ENCODE measurements at regions of chr22 and their contacts with region 1.

Region 1: DNA sequence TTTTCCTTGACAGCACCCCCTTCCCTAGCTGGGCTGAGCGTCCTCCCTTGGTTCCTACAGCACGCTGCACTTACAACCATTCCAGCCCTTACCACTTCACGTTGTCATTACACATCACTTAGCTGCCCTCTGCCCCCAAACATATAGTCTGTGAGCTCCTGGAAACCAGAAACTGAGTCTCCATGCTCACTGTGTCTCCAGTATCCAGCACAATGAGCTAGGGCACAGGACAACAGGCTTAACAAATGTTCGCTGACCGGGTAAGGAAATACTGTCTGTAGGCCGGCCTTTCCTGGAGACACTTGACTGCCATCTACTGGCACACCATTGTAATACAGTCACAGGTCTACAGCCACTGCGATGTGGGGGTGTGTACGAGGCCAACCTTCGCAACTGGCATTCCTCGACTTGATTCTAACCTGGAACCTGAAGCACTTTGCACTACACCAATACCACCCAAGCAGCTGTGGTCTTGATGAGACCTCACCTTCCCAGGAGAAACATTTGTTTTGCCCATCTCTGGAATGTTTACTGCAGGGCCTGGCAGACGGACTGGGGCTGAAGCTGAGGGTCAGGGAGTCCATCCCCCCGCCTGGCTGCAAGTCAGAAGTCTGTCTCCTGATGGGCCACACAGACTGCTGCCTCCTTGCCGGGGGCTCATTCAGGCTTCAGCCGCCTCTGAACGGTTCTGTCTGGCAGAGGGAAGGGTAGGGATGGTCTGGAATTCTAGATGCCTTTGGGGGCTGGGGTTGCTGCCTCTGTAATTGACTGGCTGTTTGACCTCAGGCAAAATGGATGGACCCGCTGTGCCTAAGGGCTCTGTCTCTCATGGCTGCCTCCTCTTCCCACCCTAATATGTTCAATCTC is 72.0 kb downstream of the SYN3 start:
- DNase-seq: peak in 1 of 2 donors; percentile 86
- ATAC-seq: peak; percentile 94 to 98 (median 97)
- H3K4me3 ChIP-seq: no peak overlapping the region
- H3K27ac ChIP-seq: no peak overlapping the region
- H3K4me1 ChIP-seq: peaks cover 0 to 11% (median 8%) of the 10 kb centered on the region in 9 donors
- H3K27me3 ChIP-seq: no peaks in the 10 kb centered on the region
- CTCF ChIP-seq: peak; percentile 83 to 95 (median 91)

Region 2: DNA sequence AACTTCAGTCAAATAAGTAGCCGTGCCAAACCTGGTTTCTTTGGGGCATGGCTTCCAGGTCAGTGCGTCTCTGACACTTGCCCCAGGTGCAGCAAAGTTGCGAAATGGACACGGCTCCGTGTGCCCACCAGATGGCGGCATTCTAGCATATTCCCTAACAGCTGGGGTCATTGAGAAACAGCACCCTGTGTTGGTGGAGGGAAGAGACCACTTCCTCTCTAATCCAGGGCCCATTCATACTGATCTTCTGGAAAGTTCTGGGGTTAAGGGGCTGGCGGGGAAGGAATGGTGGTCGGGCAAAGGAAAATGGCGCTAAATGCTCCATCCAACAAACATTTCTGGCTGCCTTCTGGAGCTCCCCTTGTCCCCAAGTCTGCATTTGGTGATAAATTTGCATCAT is 325.8 kb before region 1 on chr22:
- intact Hi-C with region 1: loop called in 7 of 10 experiments (anchors 1 to 5 kb)
- DNase-seq: peak; percentile 70 to 71
- ATAC-seq: peak; percentile 67 to 86 (median 72)
- H3K4me3 ChIP-seq: no peak overlapping the region
- H3K27ac ChIP-seq: peak overlapping the region in 2 of 10 donors; percentile 14 to 59
- H3K4me1 ChIP-seq: peaks cover 0 to 21% (median 7%) of the 10 kb centered on the region in 9 donors
- H3K27me3 ChIP-seq: no peaks in the 10 kb centered on the region
- CTCF ChIP-seq: peak; percentile 68 to 87 (median 80)

Region 3: GRCh38 chr22:32803020-32803754 is 182.9 kb before region 1 on chr22:
- intact Hi-C with region 1: loop called in 9 of 10 experiments (anchors 2 to 10 kb)
- DNase-seq: no peak
- ATAC-seq: peak in 6 of 8 donors; percentile 10 to 47 (median 36)
- H3K4me3 ChIP-seq: peak overlapping the region; percentile 78 to 100 (median 97)
- H3K27ac ChIP-seq: peak overlapping the region; percentile 84 to 96 (median 90)
- H3K4me1 ChIP-seq: peaks cover 6 to 71% (median 50%) of the 10 kb centered on the region in 9 donors
- H3K27me3 ChIP-seq: peaks cover 0 to 24% (median 0%) of the 10 kb centered on the region in 7 donors
- CTCF ChIP-seq: no peak

Region 4: DNA sequence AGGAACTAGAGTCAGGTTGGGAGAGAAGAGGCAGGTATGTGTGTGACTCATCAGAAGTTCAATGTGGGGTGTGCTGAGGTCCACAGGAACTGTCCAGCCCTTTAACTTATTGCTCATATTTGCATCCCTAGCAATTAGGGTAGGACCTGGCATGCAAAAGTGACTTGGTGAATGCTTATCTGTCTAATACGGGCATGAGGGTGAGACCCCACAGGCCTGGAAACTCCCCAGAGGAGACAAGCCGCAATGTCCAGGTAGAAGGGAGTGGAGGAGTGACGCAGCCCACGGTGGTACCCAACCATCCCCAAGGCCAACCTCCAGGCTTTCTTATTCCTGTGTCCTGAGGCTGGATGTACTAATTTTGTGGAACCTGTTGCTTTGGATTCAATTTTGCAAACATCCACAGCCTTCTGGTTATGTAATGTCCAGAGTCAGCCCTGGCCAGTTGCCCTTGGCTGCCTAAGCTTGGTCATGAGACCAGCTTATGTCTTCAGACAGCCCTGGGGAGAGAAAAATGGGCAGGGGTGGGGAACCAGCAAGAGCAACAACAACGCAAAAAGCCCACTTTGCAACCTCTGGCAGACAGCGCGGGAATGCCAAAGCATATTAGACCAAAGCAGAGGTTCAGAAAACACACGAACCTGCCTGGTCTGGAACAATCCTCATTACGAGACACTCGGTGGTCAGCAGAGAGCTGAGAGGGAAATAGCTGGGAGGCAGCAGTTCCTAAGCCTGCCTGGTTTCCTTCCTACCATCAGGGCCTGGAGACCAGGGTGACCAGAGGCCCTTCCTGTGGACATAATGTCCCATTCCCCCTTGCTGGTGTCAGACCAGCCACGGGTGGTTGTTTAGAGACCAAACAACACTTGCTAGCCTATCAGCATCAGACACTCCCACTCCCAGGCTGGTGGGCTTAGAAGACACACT is 135.3 kb before region 1 on chr22:
- intact Hi-C with region 1: loop called in 2 of 10 experiments (anchors 10 kb)
- DNase-seq: peak; percentile 78 to 80
- ATAC-seq: peak; percentile 20 to 73 (median 60)
- H3K4me3 ChIP-seq: no peak overlapping the region
- H3K27ac ChIP-seq: peak overlapping the region; percentile 67 to 90 (median 73)
- H3K4me1 ChIP-seq: peaks cover 59 to 100% (median 99%) of the 10 kb centered on the region in 9 donors
- H3K27me3 ChIP-seq: no peaks in the 10 kb centered on the region
- CTCF ChIP-seq: no peak

Region 5: GRCh38 chr22:32926600-32926999 is 59.5 kb before region 1 on chr22:
- intact Hi-C with region 1: loop called in 8 of 10 experiments (anchors 1 to 10 kb)
- DNase-seq: no peak
- ATAC-seq: peak in 1 of 8 donors; percentile 52
- H3K4me3 ChIP-seq: no peak overlapping the region
- H3K27ac ChIP-seq: no peak overlapping the region
- H3K4me1 ChIP-seq: no peaks in the 10 kb centered on the region
- H3K27me3 ChIP-seq: no peaks in the 10 kb centered on the region
- CTCF ChIP-seq: peak; percentile 35 to 80 (median 69)

Region 6: DNA sequence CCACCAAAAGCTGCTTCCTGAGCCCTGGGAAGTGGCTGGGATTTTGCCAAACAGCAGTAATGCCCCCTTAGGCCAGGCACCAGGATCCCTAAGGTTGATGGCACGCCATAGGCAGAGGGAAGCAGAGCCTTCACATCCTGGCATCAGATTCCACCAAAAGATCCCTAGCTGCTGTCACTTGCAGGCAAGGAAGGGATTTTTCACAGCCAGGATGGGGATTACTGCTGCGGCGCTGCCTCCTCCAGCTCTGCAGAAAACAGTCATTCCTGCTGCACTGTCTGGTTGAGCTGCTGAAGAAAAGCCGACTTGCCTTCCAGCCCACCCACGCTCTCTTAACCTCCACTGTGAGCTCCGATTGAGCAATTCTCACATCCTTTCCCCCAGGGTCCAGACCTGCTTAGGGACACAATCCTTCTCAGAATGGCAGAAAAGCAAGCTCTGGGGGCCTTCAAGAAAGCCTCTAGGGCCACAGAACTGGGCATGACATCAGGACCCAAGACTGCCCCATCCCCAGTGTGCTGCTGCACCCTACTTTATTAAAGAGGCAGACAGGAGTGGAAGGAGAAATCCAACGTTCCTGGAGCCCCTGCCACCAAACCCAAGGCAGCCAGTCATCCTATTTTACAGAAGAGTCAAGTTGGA is 52.1 kb after region 1 on chr22:
- intact Hi-C with region 1: no loop called
- DNase-seq: no peak
- ATAC-seq: peak in 6 of 8 donors; percentile 24 to 75 (median 46)
- H3K4me3 ChIP-seq: no peak overlapping the region
- H3K27ac ChIP-seq: no peak overlapping the region
- H3K4me1 ChIP-seq: peaks cover 0 to 4% (median 0%) of the 10 kb centered on the region in 9 donors
- H3K27me3 ChIP-seq: peaks cover 0 to 58% (median 31%) of the 10 kb centered on the region in 7 donors
- CTCF ChIP-seq: no peak

Region 7: DNA sequence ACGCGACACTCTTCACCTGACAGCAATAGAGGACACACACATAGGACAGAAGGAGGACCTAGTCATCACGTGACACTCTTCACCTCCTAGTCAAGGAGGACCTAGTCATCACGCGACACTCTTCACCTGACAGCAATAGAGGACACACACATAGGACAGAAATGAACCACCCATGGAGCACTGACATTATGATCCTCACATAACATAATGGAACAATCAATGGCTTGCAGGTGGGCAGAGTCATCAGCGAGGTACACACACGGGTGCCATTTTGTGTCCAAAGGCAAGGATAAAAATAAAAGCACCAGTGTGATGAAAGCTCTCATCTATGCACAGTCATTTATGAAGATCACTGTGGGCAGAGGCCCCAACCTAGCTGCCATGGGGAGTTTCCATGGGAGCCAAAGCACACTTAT is 579.5 kb after region 1 on chr22:
- intact Hi-C with region 1: no loop called
- DNase-seq: peak in 1 of 2 donors; percentile 13
- ATAC-seq: peak in 6 of 8 donors; percentile 30 to 94 (median 77)
- H3K4me3 ChIP-seq: no peak overlapping the region
- H3K27ac ChIP-seq: peak overlapping the region in 4 of 10 donors; percentile 26 to 82 (median 46)
- H3K4me1 ChIP-seq: peaks cover 3 to 76% (median 45%) of the 10 kb centered on the region in 9 donors
- H3K27me3 ChIP-seq: no peaks in the 10 kb centered on the region
- CTCF ChIP-seq: no peak

Measured in heart right ventricle (tissue), 16 donors.